Mammary epithelial cell (primary cell): ENCODE measurements at regions of chr16 and their contacts with region 1.

Region 1: GRCh38 chr16:88754912-88755744 is 29.9 kb downstream of the PIEZO1 start:
- DNase-seq: peak; percentile 85
- H3K4me3 ChIP-seq: no peak overlapping the region
- H3K27ac ChIP-seq: peak overlapping the region; percentile 5
- H3K4me1 ChIP-seq: peaks cover 27% of the 10 kb centered on the region
- H3K27me3 ChIP-seq: no peaks in the 10 kb centered on the region
- CTCF ChIP-seq: peak; percentile 39 to 61

Region 2: GRCh38 chr16:88672776-88673175 is 82.4 kb before region 1 on chr16:
- CTCF ChIA-PET with region 1: no interaction called
- dilution Hi-C with region 1: no loop called
- in situ Hi-C with region 1: no loop called
- intact Hi-C with region 1: no loop called
- DNase-seq: no peak
- H3K4me3 ChIP-seq: no peak overlapping the region
- H3K27ac ChIP-seq: no peak overlapping the region
- H3K4me1 ChIP-seq: no peaks in the 10 kb centered on the region
- H3K27me3 ChIP-seq: no peaks in the 10 kb centered on the region
- CTCF ChIP-seq: peak; percentile 13 to 28

Region 3: GRCh38 chr16:88770461-88771293 is 15.5 kb after region 1 on chr16:
- CTCF ChIA-PET with region 1: no interaction called
- dilution Hi-C with region 1: no loop called
- in situ Hi-C with region 1: no loop called
- intact Hi-C with region 1: loop called (anchors 2 kb)
- DNase-seq: peak; percentile 79
- H3K4me3 ChIP-seq: peak overlapping the region in 2 of 3 experiments; percentile 27 to 30
- H3K27ac ChIP-seq: peak overlapping the region; percentile 52
- H3K4me1 ChIP-seq: peaks cover 74% of the 10 kb centered on the region
- H3K27me3 ChIP-seq: no peaks in the 10 kb centered on the region
- CTCF ChIP-seq: peak in 1 of 2 donors; percentile 5

Region 4: DNA sequence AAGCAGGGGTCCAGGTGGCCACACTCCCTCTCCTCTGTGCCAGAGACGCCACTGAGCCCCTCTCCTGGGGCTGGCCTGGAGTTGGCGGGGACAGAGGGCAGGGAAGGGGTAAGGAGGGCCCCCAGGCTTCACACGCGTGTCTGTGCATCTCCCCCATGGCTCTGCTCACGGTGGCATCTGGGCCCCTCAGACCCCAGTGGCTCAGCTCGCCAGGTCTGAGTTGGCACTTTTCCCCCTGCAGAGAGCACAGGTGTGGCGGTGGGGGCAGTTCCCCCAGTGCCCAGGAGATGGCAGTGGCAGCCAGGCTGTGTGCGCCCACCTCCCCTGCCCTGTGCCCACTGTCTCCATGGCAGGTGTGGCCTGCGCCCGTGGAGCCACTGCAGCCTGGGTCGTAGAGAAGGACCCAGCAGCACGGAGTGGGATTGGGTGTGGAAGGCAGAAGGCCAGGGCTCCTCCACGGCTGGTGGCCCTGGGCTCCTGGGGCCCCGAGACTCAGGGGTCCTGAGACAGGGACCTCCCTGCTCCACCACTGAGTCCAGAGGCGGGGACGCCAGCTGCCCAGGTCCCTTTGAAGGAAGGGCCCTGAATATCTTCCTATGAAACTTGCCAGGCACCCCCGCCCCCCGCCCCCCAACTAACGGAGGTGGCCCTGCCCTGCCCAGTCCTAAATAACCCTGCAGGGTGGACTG is 60.9 kb after region 1 on chr16:
- CTCF ChIA-PET with region 1: no interaction called
- dilution Hi-C with region 1: no loop called
- in situ Hi-C with region 1: no loop called
- intact Hi-C with region 1: no loop called
- DNase-seq: no peak
- H3K4me3 ChIP-seq: no peak overlapping the region
- H3K27ac ChIP-seq: no peak overlapping the region
- H3K4me1 ChIP-seq: peaks cover 22% of the 10 kb centered on the region
- H3K27me3 ChIP-seq: no peaks in the 10 kb centered on the region
- CTCF ChIP-seq: peak; percentile 76 to 85

Region 5: DNA sequence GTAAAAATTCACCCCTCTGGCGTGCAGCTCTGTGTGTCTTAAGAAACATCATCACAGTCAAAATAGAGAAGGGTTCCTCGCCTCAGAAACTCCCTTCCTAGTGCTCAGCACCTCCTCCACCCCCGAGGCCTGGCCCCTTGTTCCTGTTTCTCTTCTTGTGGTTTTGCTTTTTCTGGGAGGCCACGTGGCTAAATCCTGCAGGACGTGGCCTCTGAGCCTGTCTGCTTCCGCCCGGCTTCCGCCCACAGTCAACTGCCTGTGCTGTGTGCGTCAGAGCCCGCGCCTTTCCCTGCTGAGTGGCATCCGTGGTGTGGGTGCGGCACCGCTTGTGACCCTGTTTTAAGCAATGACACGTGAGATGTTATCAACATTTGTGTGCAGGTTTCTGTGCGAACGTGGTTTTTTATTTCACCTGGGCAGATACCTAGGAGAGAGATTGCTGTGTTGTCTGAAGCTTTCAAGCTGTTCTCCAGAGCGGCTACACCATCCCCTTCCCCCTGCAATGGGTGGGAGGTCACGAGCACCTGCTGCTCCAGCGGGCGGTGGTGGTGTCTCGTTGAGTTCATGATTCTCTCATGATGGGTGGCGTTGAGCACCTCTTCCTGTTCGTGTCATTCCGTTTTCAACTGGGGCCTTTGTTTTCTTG is 360.2 kb after region 1 on chr16:
- CTCF ChIA-PET with region 1: no interaction called
- dilution Hi-C with region 1: loop called (anchors 10 kb)
- in situ Hi-C with region 1: no loop called
- intact Hi-C with region 1: no loop called
- DNase-seq: peak; percentile 61
- H3K4me3 ChIP-seq: no peak overlapping the region
- H3K27ac ChIP-seq: no peak overlapping the region
- H3K4me1 ChIP-seq: peaks cover 17% of the 10 kb centered on the region
- H3K27me3 ChIP-seq: no peaks in the 10 kb centered on the region
- CTCF ChIP-seq: no peak

Region 6: DNA sequence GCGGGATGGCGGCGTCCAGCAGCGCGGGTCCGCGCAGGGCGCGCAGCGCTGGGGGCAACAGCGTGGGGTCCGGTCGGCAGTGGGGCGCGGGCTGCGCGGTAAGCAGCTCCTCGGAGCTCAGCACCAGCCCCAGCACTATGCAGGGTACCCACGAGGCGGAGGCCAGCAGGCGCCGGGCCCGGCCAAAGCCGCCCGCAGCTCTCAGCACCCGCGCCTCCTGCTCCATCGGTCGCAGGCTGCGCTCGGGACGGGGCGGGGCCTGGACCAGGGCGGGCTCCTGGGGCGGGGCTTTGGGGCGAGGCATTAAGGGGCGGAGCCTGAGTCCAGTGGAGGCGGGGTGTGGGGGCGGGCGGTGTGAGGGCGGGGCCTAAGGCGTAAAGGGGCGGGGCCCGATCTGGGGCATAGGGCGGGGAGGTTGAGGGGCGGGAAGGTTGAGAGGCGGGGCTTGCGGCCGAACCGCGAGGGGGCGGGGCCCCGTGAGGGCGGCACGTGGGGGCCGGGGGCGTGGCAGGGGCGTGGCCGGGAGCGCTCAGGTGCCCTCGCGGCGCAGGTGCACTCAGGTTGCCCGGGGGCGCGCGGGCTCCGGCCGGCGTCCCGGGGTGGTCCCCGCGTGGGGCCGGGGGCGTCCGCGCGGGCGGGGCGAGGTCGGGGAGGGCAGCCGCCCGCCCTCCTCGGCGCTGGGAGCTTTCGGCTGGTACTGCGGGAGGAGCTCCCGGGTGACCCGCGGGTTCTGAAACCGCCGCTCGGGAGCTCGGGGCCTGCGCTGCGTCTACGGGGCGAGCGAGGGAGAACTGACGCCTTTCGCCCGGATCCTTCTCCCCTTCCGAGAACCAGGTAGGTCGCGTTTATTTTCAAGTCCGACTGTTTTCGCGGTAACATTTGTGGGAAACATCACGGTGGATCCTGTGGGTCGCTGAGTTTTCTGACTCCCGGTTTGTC is 446.6 kb after region 1 on chr16:
- CTCF ChIA-PET with region 1: no interaction called
- dilution Hi-C with region 1: loop called (anchors 5 kb)
- in situ Hi-C with region 1: no loop called
- intact Hi-C with region 1: no loop called
- DNase-seq: peak; percentile 59
- H3K4me3 ChIP-seq: no peak overlapping the region
- H3K27ac ChIP-seq: no peak overlapping the region
- H3K4me1 ChIP-seq: no peaks in the 10 kb centered on the region
- H3K27me3 ChIP-seq: peaks cover 18% of the 10 kb centered on the region
- CTCF ChIP-seq: no peak